Dendritic cell treated with granulocyte-macrophage colony-stimulating factor and Interleukin-4, amounts not matched to agents 40 ng/mL and 50 ng/mL, for 4 days (primary cell): ENCODE measurements at regions of chr21 and their contacts with region 1.

Region 1: GRCh38 chr21:36141513-36141925 is 6.6 kb downstream of the CBR3 start:
- H3K4me3 Mint-ChIP-seq: no peak overlapping the region
- H3K27ac Mint-ChIP-seq: no peak overlapping the region
- H3K4me1 Mint-ChIP-seq: peaks cover 7% of the 10 kb centered on the region
- H3K27me3 Mint-ChIP-seq: no peaks in the 10 kb centered on the region

Region 2: DNA sequence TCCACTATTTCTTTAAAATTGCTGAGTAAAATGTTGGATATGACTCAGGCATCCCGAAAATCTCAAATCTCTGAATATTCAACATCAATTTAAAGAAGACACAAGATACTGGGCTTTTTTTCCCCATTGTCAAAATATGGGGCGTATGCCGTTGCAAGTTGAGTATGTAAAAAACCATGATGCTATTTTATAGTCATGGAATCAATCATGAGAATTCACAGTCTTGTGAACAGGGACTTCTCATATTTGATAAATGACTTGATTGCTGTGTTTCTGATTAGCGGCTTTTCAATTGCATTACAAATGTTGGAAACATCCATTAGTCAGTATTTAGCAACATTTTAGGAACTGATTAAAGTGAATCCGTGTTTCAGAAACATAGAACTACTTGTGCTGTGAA is 126.5 kb before region 1 on chr21:
- intact Hi-C with region 1: no loop called
- H3K4me3 Mint-ChIP-seq: no peak overlapping the region
- H3K27ac Mint-ChIP-seq: no peak overlapping the region
- H3K4me1 Mint-ChIP-seq: no peaks in the 10 kb centered on the region
- H3K27me3 Mint-ChIP-seq: peaks cover 13% of the 10 kb centered on the region

Region 3: DNA sequence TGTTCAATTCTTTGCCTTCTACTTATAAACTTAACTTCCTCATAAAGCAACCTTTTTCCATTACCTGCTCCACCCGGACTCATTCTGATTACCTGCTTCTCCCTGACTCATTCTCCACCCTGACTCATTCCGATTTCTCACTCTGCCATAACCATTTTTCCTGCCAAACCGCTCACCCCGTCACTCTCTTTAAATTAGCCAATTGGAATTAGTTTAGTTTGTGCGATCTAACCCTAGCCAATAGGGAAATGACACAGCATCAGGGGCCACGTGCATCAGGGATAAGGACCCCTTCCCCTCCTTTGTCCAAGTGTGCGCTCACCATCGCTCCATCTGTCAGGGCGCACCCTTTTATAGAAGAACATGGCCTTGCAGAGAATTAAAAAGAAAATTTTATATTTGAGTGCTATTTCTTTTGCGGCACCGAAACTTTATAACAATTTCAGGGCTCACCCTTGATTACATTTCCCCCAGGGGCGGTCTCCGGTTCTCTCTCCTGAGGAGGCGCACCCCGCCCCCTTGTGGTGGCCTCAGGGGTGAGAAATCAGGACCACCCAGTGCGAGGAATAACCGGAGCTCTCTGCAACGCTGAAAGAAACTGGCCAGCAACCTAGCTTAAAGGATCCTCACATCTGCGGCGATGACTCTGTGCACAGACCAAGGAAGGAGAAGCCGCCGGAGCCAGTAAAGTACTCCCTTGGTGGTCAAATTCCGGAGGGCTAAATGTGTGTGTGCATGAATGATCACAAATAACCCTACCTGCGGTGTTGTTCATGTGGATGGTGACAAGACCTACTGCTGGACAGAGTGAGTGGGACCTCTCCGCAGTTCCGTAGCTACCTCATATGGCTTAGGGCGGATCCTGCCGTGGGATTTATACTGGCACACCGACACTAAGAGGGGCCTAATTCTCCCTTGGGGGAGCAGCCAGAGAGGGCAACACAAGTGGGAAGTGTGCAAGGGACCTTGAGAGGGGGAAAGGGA is 36.9 kb before region 1 on chr21:
- intact Hi-C with region 1: no loop called
- H3K4me3 Mint-ChIP-seq: peak overlapping the region; percentile 54
- H3K27ac Mint-ChIP-seq: no peak overlapping the region
- H3K4me1 Mint-ChIP-seq: peaks cover 17% of the 10 kb centered on the region
- H3K27me3 Mint-ChIP-seq: peaks cover 27% of the 10 kb centered on the region

Region 4: DNA sequence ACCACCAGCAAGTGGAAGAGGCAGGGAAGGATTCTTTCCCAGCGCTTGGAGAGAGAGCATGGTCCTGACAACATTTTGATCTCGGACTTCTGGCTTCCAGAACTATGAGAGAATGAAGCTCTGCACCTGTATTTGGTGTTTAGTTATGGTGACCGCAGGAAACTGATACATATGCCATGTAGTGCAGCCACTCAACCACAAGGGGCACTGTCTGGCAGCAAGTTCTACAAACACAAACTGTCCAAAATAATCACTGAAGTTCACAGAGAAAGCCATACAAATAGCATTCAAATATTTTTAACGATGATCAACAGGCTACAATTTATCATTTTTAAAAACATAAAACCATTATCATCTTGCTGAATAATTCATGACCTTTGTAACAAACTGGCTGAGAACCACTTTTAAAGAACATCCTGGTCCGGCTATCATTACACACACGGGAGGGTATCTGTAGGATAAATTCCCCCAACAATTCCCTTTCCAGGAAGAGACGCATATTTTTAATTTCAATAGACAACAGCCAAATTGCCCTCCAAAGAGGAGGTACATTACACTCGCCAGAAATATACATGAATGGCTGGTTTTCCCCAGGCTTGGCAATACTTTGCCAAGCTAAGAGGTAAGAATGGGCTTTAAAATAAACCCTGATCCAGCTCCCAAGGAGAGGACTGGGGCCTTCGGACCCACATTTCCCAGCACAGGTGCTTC is 15.9 kb before region 1 on chr21:
- intact Hi-C with region 1: no loop called
- H3K4me3 Mint-ChIP-seq: no peak overlapping the region
- H3K27ac Mint-ChIP-seq: peak overlapping the region; percentile 77
- H3K4me1 Mint-ChIP-seq: peaks cover 30% of the 10 kb centered on the region
- H3K27me3 Mint-ChIP-seq: peaks cover 15% of the 10 kb centered on the region

Region 5: GRCh38 chr21:36188081-36188681 is 46.7 kb after region 1 on chr21:
- intact Hi-C with region 1: loop called (anchors 5 kb)
- H3K4me3 Mint-ChIP-seq: no peak overlapping the region
- H3K27ac Mint-ChIP-seq: peak overlapping the region; percentile 72
- H3K4me1 Mint-ChIP-seq: peaks cover 47% of the 10 kb centered on the region
- H3K27me3 Mint-ChIP-seq: no peaks in the 10 kb centered on the region

Region 6: GRCh38 chr21:36209626-36210171 is 68.2 kb after region 1 on chr21:
- intact Hi-C with region 1: loop called (anchors 1 kb)
- H3K4me3 Mint-ChIP-seq: no peak overlapping the region
- H3K27ac Mint-ChIP-seq: peak overlapping the region; percentile 5
- H3K4me1 Mint-ChIP-seq: peaks cover 24% of the 10 kb centered on the region
- H3K27me3 Mint-ChIP-seq: no peaks in the 10 kb centered on the region